Activated naive CD4-positive, alpha-beta T cell treated with anti-CD3 and anti-CD28 coated beads for 36 hours (primary cell): ENCODE measurements at regions of chr17 and their contacts with region 1.

Region 1: GRCh38 chr17:51371732-51372151 is 111.4 kb downstream of the UTP18 start:
- DNase-seq: peak; percentile 78
- H3K4me3 Mint-ChIP-seq: peak overlapping the region; percentile 31
- H3K27ac Mint-ChIP-seq: no peak overlapping the region
- H3K4me1 Mint-ChIP-seq: peaks cover 20% of the 10 kb centered on the region
- H3K27me3 Mint-ChIP-seq: no peaks in the 10 kb centered on the region

Region 2: GRCh38 chr17:51322390-51323029 is 49.2 kb before region 1 on chr17:
- CTCF ChIA-PET with region 1: no interaction called
- intact Hi-C with region 1: loop called (anchors 2 kb)
- DNase-seq: peak; percentile 8
- H3K4me3 Mint-ChIP-seq: no peak overlapping the region
- H3K27ac Mint-ChIP-seq: no peak overlapping the region
- H3K4me1 Mint-ChIP-seq: no peaks in the 10 kb centered on the region
- H3K27me3 Mint-ChIP-seq: peaks cover 5% of the 10 kb centered on the region

Region 3: DNA sequence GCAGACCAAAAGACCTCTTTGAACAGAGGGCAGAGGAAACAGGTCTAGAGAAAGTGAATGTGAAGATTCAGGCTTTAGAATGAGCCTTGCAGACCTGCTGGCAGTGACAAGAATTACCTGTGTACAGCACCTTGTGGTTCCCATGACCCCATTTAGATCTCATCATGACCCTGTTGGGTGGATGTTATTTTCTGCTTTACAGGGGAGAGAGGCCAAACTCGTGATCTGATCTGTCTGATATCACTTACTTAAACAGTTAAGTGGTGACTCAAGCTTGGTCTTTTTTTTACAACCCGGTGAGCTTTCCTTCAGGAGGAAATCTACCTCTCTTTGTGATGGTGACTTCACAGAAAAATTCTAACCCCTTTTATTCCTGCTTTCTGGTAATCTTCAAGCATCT is 29.4 kb before region 1 on chr17:
- CTCF ChIA-PET with region 1: no interaction called
- intact Hi-C with region 1: no loop called
- DNase-seq: no peak
- H3K4me3 Mint-ChIP-seq: no peak overlapping the region
- H3K27ac Mint-ChIP-seq: no peak overlapping the region
- H3K4me1 Mint-ChIP-seq: no peaks in the 10 kb centered on the region
- H3K27me3 Mint-ChIP-seq: no peaks in the 10 kb centered on the region

Region 4: DNA sequence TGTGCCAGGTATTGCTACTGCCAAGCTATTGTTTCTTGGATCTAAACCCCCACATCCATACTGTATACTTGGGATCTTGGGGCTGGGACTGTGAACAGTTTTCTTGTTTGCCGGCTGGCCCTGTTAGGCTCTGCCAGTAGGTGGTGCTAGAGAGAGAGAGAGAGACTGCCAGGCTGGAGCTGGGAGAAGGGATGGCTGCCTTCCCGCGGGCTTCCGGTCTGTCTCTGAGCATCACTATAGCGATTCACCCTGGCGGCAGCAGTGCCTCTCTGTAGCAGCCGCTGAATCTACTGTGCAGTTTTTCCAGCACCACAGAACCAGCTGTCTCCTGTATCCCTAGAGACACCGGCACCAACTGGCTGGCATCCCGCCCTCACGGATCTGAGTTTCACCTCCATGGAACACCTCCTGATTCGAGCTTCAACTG is 89.8 kb after region 1 on chr17:
- CTCF ChIA-PET with region 1: interaction called, 15 read pairs
- intact Hi-C with region 1: loop called (anchors 2 kb)
- DNase-seq: peak; percentile 76
- H3K4me3 Mint-ChIP-seq: no peak overlapping the region
- H3K27ac Mint-ChIP-seq: no peak overlapping the region
- H3K4me1 Mint-ChIP-seq: peaks cover 2% of the 10 kb centered on the region
- H3K27me3 Mint-ChIP-seq: no peaks in the 10 kb centered on the region

Region 5: GRCh38 chr17:51540151-51540550 is 168.4 kb after region 1 on chr17:
- CTCF ChIA-PET with region 1: interaction called, 89 read pairs
- intact Hi-C with region 1: loop called (anchors 1 kb)
- DNase-seq: peak; percentile 39
- H3K4me3 Mint-ChIP-seq: no peak overlapping the region
- H3K27ac Mint-ChIP-seq: no peak overlapping the region
- H3K4me1 Mint-ChIP-seq: peaks cover 15% of the 10 kb centered on the region
- H3K27me3 Mint-ChIP-seq: no peaks in the 10 kb centered on the region

Region 6: GRCh38 chr17:51745979-51746378 is 374.2 kb after region 1 on chr17:
- CTCF ChIA-PET with region 1: interaction called, 3 read pairs
- intact Hi-C with region 1: loop called (anchors 5 kb)
- DNase-seq: no peak
- H3K4me3 Mint-ChIP-seq: no peak overlapping the region
- H3K27ac Mint-ChIP-seq: no peak overlapping the region
- H3K4me1 Mint-ChIP-seq: peaks cover 6% of the 10 kb centered on the region
- H3K27me3 Mint-ChIP-seq: no peaks in the 10 kb centered on the region

Region 7: DNA sequence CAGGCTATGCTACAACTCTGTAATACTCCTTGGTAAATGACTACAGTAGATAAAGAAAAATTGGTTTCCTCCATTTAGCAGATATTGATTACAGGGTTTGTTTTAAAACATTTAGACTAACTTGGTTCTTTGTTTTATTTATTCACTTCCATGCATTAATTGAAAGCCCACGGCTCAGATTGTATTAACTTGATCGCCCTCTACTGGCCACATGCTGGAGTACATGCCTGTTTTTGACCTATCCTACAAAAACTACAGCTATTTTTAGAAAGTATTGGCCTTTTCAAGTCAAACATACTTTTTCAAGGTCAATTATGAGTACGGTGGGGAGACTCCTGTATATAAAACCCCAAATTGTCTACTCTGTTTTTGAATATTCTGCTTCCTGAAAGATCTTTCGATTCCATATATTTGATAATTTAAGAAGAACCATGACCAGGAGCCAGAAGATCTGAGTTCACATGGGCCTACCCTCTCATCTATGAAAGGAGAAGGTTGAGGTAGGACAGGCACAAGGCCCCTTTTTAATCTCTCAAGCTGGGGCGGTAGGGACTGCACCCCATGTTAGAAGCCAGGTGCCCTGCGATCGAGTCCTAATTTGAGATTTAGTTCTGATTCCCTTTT is 735.0 kb after region 1 on chr17:
- CTCF ChIA-PET with region 1: interaction called, 3 read pairs
- intact Hi-C with region 1: loop called (anchors 2 kb)
- DNase-seq: peak; percentile 66
- H3K4me3 Mint-ChIP-seq: no peak overlapping the region
- H3K27ac Mint-ChIP-seq: no peak overlapping the region
- H3K4me1 Mint-ChIP-seq: no peaks in the 10 kb centered on the region
- H3K27me3 Mint-ChIP-seq: peaks cover 17% of the 10 kb centered on the region